Mammary epithelial cell (primary cell): ENCODE measurements at regions of chr1 and their contacts with region 1.

Region 1: DNA sequence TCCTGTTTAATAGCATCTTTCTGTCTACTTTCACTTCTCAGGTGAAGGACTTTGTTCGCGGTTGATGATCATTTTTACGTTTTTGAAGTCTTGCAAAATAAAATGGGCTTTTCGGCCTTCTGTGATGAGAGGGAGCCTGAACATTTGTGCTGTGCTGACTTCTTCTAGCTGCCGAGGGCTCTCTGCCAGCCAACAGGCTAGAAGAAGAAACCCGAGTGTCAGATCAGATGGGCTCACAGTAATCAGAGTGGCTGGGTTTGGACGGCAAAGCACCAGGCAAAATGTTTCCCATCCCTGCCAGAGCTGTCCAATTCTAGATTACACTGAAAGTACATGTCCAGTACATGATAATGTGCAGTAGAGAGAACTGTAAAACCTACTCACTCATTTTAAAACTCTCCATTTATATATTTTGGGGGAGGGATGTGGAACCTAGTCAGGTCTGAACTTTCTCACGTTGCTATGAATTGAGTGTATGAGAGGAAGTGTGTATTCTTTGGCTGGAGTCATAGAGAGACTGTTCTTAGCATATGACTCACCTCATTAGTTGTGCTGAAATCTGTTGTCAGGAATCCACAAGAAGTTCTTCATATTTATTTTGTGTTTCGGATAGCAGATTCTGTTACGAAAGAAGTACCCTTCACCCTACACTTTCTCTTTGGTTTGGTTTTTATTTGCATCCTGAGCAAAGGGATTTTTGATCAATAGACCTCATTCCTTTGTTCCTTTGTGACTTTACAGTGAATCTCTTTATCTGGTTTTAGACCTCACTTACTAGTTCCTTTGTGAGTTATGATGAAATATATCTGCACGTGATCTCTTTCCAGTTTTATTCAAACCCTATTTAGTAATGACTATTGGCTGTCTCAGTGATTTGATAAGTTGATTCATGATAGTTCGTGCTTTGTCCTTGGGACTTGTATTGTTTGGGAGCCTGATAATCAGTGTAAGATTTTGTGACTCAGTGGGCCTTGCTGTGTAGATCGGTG is 4.8 kb downstream of the ATP1A1 start:
- DNase-seq: peak; percentile 92
- H3K4me3 ChIP-seq: peak overlapping the region; percentile 23 to 37 (median 31)
- H3K27ac ChIP-seq: peak overlapping the region; percentile 95
- H3K4me1 ChIP-seq: peaks cover 53% of the 10 kb centered on the region
- H3K27me3 ChIP-seq: no peaks in the 10 kb centered on the region
- CTCF ChIP-seq: no peak

Region 2: GRCh38 chr1:116388122-116388521 is 10.3 kb after region 1 on chr1:
- CTCF ChIA-PET with region 1: no interaction called
- dilution Hi-C with region 1: no loop called
- in situ Hi-C with region 1: no loop called
- intact Hi-C with region 1: loop called (anchors 1 kb)
- DNase-seq: no peak
- H3K4me3 ChIP-seq: no peak overlapping the region
- H3K27ac ChIP-seq: no peak overlapping the region
- H3K4me1 ChIP-seq: peaks cover 15% of the 10 kb centered on the region
- H3K27me3 ChIP-seq: no peaks in the 10 kb centered on the region
- CTCF ChIP-seq: no peak

Region 3: GRCh38 chr1:116418091-116418830 is 40.4 kb after region 1 on chr1:
- CTCF ChIA-PET with region 1: no interaction called
- dilution Hi-C with region 1: no loop called
- in situ Hi-C with region 1: no loop called
- intact Hi-C with region 1: loop called (anchors 5 kb)
- DNase-seq: peak; percentile 77
- H3K4me3 ChIP-seq: peak overlapping the region; percentile 62 to 83 (median 71)
- H3K27ac ChIP-seq: peak overlapping the region; percentile 74
- H3K4me1 ChIP-seq: peaks cover 14% of the 10 kb centered on the region
- H3K27me3 ChIP-seq: no peaks in the 10 kb centered on the region
- CTCF ChIP-seq: no peak